Activated naive CD4-positive, alpha-beta T cell treated with anti-CD3 and anti-CD28 coated beads for 36 hours (primary cell): ENCODE measurements at regions of chr9 and their contacts with region 1.

Region 1: DNA sequence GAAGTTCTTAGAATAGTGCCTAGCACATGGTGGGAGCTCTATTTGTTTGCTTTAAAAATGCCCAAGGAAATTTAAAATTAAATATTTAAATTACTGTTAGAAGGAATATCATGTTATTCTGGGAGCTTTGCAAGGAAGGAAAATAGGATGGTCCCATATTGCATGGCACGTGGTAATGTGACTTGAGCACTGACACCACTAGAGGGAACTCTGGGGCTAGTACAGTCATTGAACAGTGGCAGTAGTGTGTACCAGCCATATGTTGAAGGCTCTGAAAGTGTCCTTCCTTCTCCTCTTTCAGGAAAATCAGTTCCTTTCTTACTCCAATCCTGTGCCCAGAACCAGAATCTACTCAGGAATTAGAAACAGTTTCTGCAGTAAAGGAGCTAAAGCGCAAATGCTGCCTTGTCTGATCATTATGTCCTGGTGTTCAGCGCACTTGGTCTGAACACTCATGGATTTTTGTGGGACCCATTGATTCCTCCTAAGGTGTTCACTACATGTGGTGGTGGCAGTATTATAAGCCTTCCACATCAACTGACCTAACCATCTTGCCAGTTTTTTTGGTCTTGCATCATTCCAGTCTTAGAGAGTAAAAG is 54.1 kb downstream of the GDA start:
- DNase-seq: peak; percentile 18
- H3K4me3 Mint-ChIP-seq: no peak overlapping the region
- H3K27ac Mint-ChIP-seq: no peak overlapping the region
- H3K4me1 Mint-ChIP-seq: no peaks in the 10 kb centered on the region
- H3K27me3 Mint-ChIP-seq: peaks cover 3% of the 10 kb centered on the region

Region 2: DNA sequence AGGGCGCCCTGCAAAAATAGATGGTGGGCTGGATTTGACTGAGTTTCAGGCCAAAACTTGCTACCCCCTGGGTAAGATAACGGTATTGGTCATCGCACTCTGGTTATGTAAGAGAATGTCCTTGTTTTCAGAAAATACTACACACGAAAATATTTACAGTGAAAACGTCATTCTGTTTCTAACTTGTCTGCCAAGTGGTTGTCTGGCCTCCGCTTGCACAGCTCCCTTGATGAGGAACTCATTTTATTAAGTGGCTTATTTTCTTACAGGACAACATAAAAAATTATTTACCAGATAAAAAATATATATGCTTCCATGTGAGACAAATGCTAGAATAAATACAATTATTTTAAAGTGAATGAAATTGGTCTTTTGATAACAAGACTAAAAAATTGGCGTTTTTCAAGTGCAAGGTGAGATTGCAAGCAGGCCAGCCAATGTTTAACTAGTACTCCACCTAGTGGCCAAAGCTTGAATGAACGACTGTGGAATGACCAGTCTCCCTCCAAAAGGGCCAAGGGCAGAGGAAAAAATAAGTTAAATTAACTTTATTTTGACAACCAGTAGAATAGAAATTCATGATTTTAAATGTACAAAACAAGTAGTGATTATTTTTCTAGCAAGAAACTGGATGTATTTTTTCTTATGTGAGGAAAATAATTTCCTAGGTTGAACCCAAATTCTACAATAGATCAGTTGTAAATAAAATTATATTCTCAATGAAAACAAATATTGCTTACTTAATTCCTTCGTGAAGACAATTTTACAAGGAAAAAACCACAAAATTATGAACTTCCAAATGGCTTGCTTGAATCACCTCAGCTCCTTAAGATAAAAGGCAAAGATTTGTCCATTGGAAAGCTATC is 68.5 kb after region 1 on chr9:
- CTCF ChIA-PET with region 1: interaction called, 10 read pairs
- intact Hi-C with region 1: loop called (anchors 1 kb)
- DNase-seq: peak; percentile 69
- H3K4me3 Mint-ChIP-seq: no peak overlapping the region
- H3K27ac Mint-ChIP-seq: no peak overlapping the region
- H3K4me1 Mint-ChIP-seq: no peaks in the 10 kb centered on the region
- H3K27me3 Mint-ChIP-seq: no peaks in the 10 kb centered on the region